ENCODE measurements at regions of chr18 and their contacts with region 1.

Region 1: GRCh38 chr18:8696749-8697211 is 8.6 kb upstream of the MTCL1 start:
- DNase-seq: peak; percentile 72
- ATAC-seq: peak; percentile 78
- H3K4me3 Mint-ChIP-seq: no peak overlapping the region
- H3K27ac Mint-ChIP-seq: no peak overlapping the region
- H3K4me1 Mint-ChIP-seq: no peaks in the 10 kb centered on the region
- H3K27me3 Mint-ChIP-seq: peaks cover 20% of the 10 kb centered on the region

Region 2: DNA sequence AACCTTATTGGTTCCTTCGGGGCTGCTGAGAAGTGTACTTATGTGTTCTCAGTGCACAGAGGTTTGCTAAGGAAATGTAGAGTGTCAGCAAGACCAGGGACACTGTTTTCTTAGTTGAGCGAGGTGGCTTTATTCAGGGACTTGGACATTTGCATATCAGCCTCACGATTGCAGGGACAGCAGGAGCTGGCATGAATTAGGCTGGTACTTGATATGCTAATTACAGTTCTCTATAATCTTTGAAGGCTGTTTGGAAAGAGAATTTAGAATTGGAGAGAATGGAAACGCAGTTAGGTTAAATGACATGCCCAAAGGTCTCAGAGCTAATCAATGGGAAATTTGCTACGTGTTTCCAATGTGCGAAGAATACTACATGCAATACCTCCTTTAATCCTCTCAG is 10.2 kb before region 1 on chr18:
- CTCF ChIA-PET with region 1: interaction called, 12 read pairs
- DNase-seq: no peak
- ATAC-seq: no peak
- H3K4me3 Mint-ChIP-seq: no peak overlapping the region
- H3K27ac Mint-ChIP-seq: no peak overlapping the region
- H3K4me1 Mint-ChIP-seq: no peaks in the 10 kb centered on the region
- H3K27me3 Mint-ChIP-seq: peaks cover 1% of the 10 kb centered on the region

Region 3: GRCh38 chr18:8982416-8983184 is 285.8 kb after region 1 on chr18:
- CTCF ChIA-PET with region 1: interaction called, 39 read pairs
- DNase-seq: no peak
- ATAC-seq: no peak
- H3K4me3 Mint-ChIP-seq: no peak overlapping the region
- H3K27ac Mint-ChIP-seq: no peak overlapping the region
- H3K4me1 Mint-ChIP-seq: peaks cover 6% of the 10 kb centered on the region
- H3K27me3 Mint-ChIP-seq: peaks cover 8% of the 10 kb centered on the region